Heart left ventricle (tissue), 16 donors: ENCODE measurements at regions of chr14 and their contacts with region 1.

Region 1: GRCh38 chr14:22929104-22929847 is at the start of gene PRMT5:
- DNase-seq: peak; percentile 98 to 100 (median 99)
- ATAC-seq: peak; percentile 97 to 99 (median 98)
- H3K4me3 ChIP-seq: peak within 1 kb of the TSS; percentile 74 to 97 (median 84)
- H3K27ac ChIP-seq: peak within 1 kb of the TSS; percentile 51 to 94 (median 83)
- H3K4me1 ChIP-seq: peaks cover 0 to 22% (median 13%) of the 10 kb centered on the region in 12 donors
- H3K27me3 ChIP-seq: no peaks in the 10 kb centered on the region
- CTCF ChIP-seq: no peak
- POLR2A ChIP-seq: peak in 1 of 2 donors; percentile 78
- total RNA-seq, gene PRMT5: 37.2 to 60.2 (median 48.8) TPM

Region 2: DNA sequence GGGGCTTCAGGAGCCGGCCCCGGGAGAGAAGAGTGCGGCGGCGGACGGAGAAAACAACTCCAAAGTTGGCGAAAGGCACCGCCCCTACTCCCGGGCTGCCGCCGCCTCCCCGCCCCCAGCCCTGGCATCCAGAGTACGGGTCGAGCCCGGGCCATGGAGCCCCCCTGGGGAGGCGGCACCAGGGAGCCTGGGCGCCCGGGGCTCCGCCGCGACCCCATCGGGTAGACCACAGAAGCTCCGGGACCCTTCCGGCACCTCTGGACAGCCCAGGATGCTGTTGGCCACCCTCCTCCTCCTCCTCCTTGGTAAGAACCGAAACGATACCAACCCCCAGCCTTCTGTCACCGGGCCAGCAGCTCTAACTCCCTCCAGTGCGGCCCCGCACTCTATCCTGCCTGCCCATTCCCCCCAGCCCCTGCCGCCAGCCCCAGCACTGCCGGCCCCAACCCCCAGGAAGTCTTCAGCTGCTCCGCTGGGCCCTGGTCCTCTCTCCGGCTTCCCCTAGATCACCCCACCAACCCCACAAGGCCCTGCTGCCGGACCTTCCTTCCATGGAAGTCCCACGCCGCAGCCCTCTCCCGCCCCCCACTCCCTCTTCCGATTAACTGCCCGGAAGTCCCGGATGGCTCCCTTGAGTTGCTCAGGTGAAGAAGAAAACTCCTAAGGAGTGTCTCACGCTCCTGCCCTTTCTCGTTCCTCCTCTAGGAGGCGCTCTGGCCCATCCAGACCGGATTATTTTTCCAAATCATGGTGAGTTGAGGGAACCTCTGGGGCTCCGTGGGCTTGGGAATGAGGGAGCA is 57.0 kb before region 1 on chr14:
- intact Hi-C with region 1: loop called in 1 of 10 experiments (anchors 5 kb)
- DNase-seq: peak; percentile 70 to 80 (median 76)
- ATAC-seq: peak; percentile 6 to 60 (median 51)
- H3K4me3 ChIP-seq: peak overlapping the region; percentile 66 to 100 (median 95)
- H3K27ac ChIP-seq: peak overlapping the region; percentile 90 to 100 (median 98)
- H3K4me1 ChIP-seq: peaks cover 4 to 32% (median 18%) of the 10 kb centered on the region in 12 donors
- H3K27me3 ChIP-seq: no peaks in the 10 kb centered on the region
- CTCF ChIP-seq: peak; percentile 85 to 95 (median 89)
- POLR2A ChIP-seq: no peak

Region 3: DNA sequence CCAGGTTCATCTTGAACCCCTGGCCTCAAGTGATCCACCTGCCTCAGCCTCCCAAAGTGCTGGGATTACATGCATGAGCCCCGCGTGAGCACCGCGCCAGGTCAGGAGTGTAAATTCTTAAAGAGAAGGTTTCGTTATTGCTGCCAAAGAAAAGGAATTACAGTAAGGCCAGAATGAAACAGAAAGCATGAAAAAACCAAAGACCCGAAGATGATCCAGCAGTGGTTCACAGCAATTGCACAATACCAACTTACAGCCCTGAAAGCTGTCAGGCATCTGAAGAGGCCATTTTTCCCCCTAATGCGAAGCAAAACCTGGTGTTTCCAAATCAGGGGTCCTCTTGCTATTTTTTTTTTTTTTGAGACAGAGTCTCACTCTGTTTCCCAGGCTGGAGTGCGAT is 20.7 kb before region 1 on chr14:
- intact Hi-C with region 1: no loop called
- DNase-seq: no peak
- ATAC-seq: no peak
- H3K4me3 ChIP-seq: no peak overlapping the region
- H3K27ac ChIP-seq: peak overlapping the region in 1 of 12 donors; percentile 65
- H3K4me1 ChIP-seq: peaks cover 0 to 14% (median 0%) of the 10 kb centered on the region in 12 donors
- H3K27me3 ChIP-seq: no peaks in the 10 kb centered on the region
- CTCF ChIP-seq: no peak
- POLR2A ChIP-seq: no peak

Region 4: GRCh38 chr14:22918804-22919600 is 10.3 kb before region 1 on chr14 and contains the start of gene RBM23:
- intact Hi-C with region 1: loop called in 2 of 10 experiments (anchors 1 kb)
- DNase-seq: peak; percentile 100
- ATAC-seq: peak; percentile 92 to 96 (median 94)
- H3K4me3 ChIP-seq: peak within 1 kb of the TSS; percentile 55 to 94 (median 75)
- H3K27ac ChIP-seq: peak within 1 kb of the TSS; percentile 87 to 100 (median 95)
- H3K4me1 ChIP-seq: peaks cover 0 to 55% (median 24%) of the 10 kb centered on the region in 12 donors
- H3K27me3 ChIP-seq: no peaks in the 10 kb centered on the region
- CTCF ChIP-seq: no peak
- POLR2A ChIP-seq: peak; percentile 72 to 83
- total RNA-seq, gene RBM23: 35.4 to 45.0 (median 41.6) TPM

Region 5: GRCh38 chr14:22973217-22974032 is 44.1 kb after region 1 on chr14:
- intact Hi-C with region 1: loop called in 1 of 10 experiments (anchors 5 kb)
- DNase-seq: peak in 2 of 5 donors; percentile 37 to 43
- ATAC-seq: peak; percentile 5 to 57 (median 42)
- H3K4me3 ChIP-seq: no peak overlapping the region
- H3K27ac ChIP-seq: peak overlapping the region in 5 of 12 donors; percentile 5 to 55 (median 27)
- H3K4me1 ChIP-seq: peaks cover 3 to 30% (median 20%) of the 10 kb centered on the region in 12 donors
- H3K27me3 ChIP-seq: no peaks in the 10 kb centered on the region
- CTCF ChIP-seq: peak; percentile 53 to 80 (median 66)
- POLR2A ChIP-seq: no peak

Region 6: GRCh38 chr14:22986508-22987054 is 57.3 kb after region 1 on chr14:
- intact Hi-C with region 1: loop called in 3 of 10 experiments (anchors 2 kb)
- DNase-seq: peak; percentile 82 to 88 (median 87)
- ATAC-seq: peak; percentile 35 to 52 (median 40)
- H3K4me3 ChIP-seq: no peak overlapping the region
- H3K27ac ChIP-seq: no peak overlapping the region
- H3K4me1 ChIP-seq: peaks cover 0 to 19% (median 8%) of the 10 kb centered on the region in 12 donors
- H3K27me3 ChIP-seq: peaks cover 0 to 8% (median 0%) of the 10 kb centered on the region in 9 donors
- CTCF ChIP-seq: peak; percentile 85 to 95 (median 92)
- POLR2A ChIP-seq: no peak